K562 (cell line): ENCODE measurements at regions of chr2 and their contacts with region 1.

Region 1: DNA sequence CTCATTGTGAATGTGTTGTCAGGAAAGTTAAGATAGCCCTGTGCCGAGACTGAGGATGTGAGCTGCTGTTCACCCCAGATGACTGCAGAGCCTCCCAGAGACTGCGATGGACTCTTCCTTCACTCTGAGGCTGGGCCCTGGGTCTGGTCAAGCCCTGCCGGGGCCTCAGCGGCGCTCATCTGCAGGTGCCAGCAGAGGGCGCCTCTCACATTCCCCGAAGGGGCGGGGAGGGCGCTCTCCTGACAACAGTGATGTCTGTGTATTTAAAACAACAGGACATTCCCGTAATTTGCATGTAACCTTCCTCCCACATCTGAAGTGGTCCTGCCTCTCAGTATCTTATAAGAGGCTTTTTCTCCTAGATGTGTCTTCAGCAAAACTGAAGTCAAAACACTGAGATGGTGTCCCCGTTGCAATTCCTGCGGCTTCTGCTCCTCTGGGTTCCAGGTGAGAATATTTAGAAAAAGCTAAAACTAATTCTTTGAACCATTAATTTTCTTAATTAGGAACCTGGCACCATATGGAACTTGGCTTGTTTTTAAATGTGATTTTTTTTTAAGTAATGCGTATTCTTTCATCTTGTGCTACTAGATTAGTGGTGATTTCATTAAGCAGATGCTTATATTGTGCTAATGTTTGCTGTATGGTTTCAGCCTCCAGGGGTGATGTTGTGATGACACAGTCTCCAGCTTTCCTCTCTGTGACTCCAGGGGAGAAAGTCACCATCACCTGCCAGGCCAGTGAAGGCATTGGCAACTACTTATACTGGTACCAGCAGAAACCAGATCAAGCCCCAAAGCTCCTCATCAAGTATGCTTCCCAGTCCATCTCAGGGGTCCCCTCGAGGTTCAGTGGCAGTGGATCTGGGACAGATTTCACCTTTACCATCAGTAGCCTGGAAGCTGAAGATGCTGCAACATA is 1378.1 kb downstream of the RPIA start:
- DNase-seq: peak; percentile 55 to 69 (median 62)
- ATAC-seq: peak; percentile 100
- H3K4me3 ChIP-seq: no peak overlapping the region
- H3K27ac ChIP-seq: no peak overlapping the region
- H3K4me1 ChIP-seq: no peaks in the 10 kb centered on the region
- H3K27me3 ChIP-seq: no peaks in the 10 kb centered on the region
- CTCF ChIP-seq: peak; percentile 80 to 94 (median 83)
- EP300 ChIP-seq: no peak
- POLR2A ChIP-seq: no peak
- RAD21 ChIP-seq: peak in 1 of 2 experiments; percentile 48; a peak in 2 of 4 replicates

Region 2: GRCh38 chr2:88627056-88627855 is 1442.3 kb before region 1 on chr2 and contains the start of gene EIF2AK3:
- CTCF ChIA-PET with region 1: no interaction called
- POLR2A ChIA-PET with region 1: no interaction called
- in situ Hi-C with region 1: no loop called
- intact Hi-C with region 1: no loop called
- DNase-seq: peak; percentile 96 to 100 (median 98)
- ATAC-seq: peak; percentile 94
- H3K4me3 ChIP-seq: peak within 1 kb of the TSS; percentile 90
- H3K27ac ChIP-seq: peak within 1 kb of the TSS; percentile 98
- H3K4me1 ChIP-seq: peaks cover 16 to 22% of the 10 kb centered on the region in 2 experiments; a peak in 4 of 5 replicates
- H3K27me3 ChIP-seq: no peaks in the 10 kb centered on the region
- CTCF ChIP-seq: peak in 1 of 3 experiments; percentile 10; a peak in 1 of 6 replicates
- EP300 ChIP-seq: no peak
- POLR2A ChIP-seq: peak; percentile 73
- RAD21 ChIP-seq: no peak
- polyA plus RNA-seq, gene EIF2AK3: 1.7 to 2.2 TPM

Region 3: GRCh38 chr2:90207454-90208058 is 138.0 kb after region 1 on chr2:
- CTCF ChIA-PET with region 1: no interaction called
- POLR2A ChIA-PET with region 1: no interaction called
- in situ Hi-C with region 1: loop called (anchors 25 kb)
- intact Hi-C with region 1: no loop called
- DNase-seq: peak in 3 of 4 experiments; percentile 7 to 40 (median 37)
- ATAC-seq: peak; percentile 76
- H3K4me3 ChIP-seq: no peak overlapping the region
- H3K27ac ChIP-seq: no peak overlapping the region
- H3K4me1 ChIP-seq: no peaks in the 10 kb centered on the region
- H3K27me3 ChIP-seq: no peaks in the 10 kb centered on the region
- CTCF ChIP-seq: peak; percentile 29 to 51 (median 37); a peak in 4 of 6 replicates
- EP300 ChIP-seq: no peak
- POLR2A ChIP-seq: no peak
- RAD21 ChIP-seq: no peak; a peak in 1 of 4 replicates